PC-9 (cell line): ENCODE measurements at regions of chr2 and their contacts with region 1.

Region 1: DNA sequence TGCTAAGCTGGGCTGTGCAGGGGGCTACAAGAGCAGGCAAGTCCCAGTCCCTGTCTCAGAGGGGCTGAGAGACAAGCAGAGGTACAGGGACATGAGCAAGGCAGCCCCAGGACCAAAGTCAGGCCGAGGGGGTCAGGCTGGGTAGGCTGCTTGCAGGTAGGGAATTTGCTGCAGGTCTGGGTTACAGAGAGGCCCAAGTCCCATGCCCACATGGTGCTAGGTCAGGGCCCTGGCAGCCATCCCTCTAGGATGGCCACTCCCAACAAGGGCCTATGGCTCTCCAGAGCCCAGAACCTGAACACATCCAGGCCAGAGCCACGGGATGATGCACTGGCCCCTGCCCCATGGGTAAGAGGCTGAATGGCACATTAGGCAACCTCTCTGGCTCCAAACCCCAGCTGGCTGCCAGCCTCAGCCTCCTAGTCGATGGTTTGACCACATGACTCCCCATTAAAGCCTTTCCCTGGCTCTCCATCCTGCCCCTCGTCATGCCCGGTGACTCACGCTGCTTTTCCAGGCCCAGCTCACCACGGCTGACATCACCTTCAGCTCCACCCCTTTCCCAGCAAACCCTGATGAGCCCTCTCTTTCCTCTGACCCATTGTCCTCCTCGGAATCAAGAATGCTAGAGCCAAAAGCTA is 83.7 kb downstream of the SDC1 start:
- DNase-seq: peak; percentile 72 to 87
- H3K4me3 ChIP-seq: no peak overlapping the region
- H3K27ac ChIP-seq: peak overlapping the region; percentile 61
- H3K4me1 ChIP-seq: peaks cover 74% of the 10 kb centered on the region
- H3K27me3 ChIP-seq: no peaks in the 10 kb centered on the region
- CTCF ChIP-seq: no peak

Region 2: GRCh38 chr2:20113980-20114954 is 27.0 kb before region 1 on chr2:
- CTCF ChIA-PET with region 1: no interaction called
- POLR2A ChIA-PET with region 1: interaction called, 5 read pairs
- intact Hi-C with region 1: loop called (anchors 2 kb)
- DNase-seq: peak; percentile 71 to 78
- H3K4me3 ChIP-seq: no peak overlapping the region
- H3K27ac ChIP-seq: peak overlapping the region; percentile 78
- H3K4me1 ChIP-seq: peaks cover 59% of the 10 kb centered on the region
- H3K27me3 ChIP-seq: no peaks in the 10 kb centered on the region
- CTCF ChIP-seq: no peak

Region 3: GRCh38 chr2:20179755-20180594 is 38.7 kb after region 1 on chr2:
- CTCF ChIA-PET with region 1: interaction called, 3 read pairs
- POLR2A ChIA-PET with region 1: interaction called, 5 read pairs
- intact Hi-C with region 1: loop called (anchors 1 kb)
- DNase-seq: peak in 1 of 2 experiments; percentile 80
- H3K4me3 ChIP-seq: no peak overlapping the region
- H3K27ac ChIP-seq: no peak overlapping the region
- H3K4me1 ChIP-seq: peaks cover 28% of the 10 kb centered on the region
- H3K27me3 ChIP-seq: no peaks in the 10 kb centered on the region
- CTCF ChIP-seq: no peak

Region 4: DNA sequence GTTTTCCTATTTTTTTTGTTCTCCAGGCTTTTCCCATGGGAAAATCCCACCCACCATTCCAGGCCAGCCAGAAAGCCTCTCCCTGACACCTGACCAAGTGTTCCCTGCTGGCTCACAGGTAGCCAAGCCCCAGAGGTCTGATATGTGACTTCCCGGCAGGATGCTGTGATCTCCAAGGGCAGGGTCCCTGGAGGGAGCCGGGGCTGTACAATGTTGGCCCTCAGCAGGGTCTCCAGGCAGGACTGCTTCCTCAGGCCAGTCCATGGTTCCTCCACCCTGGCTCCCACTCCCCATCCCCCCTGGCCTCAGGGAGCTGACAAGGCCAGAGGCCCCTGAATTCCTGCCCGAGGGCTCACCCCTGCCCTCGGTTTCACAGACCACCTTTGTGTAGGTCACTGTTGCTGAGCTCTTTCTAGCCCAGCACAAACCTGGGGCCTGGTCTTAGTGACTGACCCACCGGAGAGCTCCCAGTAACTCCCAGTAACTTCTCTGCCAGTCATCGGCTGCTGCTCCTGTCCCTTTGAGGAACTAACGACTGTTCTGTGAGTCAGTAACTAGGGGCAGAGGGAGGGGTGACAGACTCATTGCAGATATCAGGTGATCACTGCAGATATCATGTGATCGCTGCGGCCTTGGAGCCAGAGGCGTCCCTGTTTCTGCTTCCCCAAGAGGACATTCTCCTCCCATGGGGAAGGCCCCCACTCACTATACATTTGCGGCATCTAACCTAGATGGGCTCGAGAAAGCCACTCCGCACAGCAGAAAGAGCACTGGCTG is 45.0 kb after region 1 on chr2:
- CTCF ChIA-PET with region 1: no interaction called
- POLR2A ChIA-PET with region 1: interaction called, 5 read pairs
- intact Hi-C with region 1: loop called (anchors 2 kb)
- DNase-seq: peak; percentile 74 to 93
- H3K4me3 ChIP-seq: peak overlapping the region; percentile 54
- H3K27ac ChIP-seq: peak overlapping the region; percentile 92
- H3K4me1 ChIP-seq: peaks cover 59% of the 10 kb centered on the region
- H3K27me3 ChIP-seq: no peaks in the 10 kb centered on the region
- CTCF ChIP-seq: no peak